HepG2 (cell line): ENCODE measurements at regions of chr10 and their contacts with region 1.

Region 1: DNA sequence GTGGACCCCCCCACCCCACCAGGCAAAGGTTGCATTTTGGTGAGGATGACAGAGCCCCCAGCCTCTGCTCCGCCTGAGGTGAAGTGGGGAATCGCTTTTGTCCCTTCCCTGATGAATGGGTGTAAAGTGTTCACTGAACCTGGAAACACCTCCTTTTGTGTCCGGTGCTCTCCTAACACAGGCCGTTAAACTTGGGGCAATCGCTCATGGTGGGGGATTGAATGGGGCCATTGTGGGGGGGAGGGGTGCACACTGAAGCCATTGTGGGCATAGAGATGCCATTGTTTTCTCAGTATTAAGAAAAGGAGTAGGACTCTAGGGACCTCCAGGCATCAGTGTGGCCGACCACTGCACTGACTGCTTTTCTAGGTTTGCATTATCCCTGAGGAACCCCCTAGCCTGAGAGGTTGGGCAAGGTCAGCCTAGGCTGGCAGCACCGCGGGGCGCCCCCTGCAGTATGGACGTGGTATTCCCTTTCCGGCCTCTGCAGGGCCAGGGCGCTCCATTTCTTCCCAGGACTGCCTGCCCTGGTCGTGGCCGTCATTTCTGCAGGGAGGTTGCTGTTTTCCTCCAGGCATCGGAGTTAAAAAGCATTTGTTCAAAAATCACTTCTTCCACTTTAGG is 158.3 kb downstream of the TCF7L2 start:
- DNase-seq: no peak
- ATAC-seq: peak; percentile 81
- H3K4me3 ChIP-seq: no peak overlapping the region
- H3K27ac ChIP-seq: no peak overlapping the region
- H3K4me1 ChIP-seq: peaks cover 26% of the 10 kb centered on the region
- H3K27me3 ChIP-seq: no peaks in the 10 kb centered on the region
- CTCF ChIP-seq: peak; percentile 71
- EP300 ChIP-seq: no peak
- POLR2A ChIP-seq: no peak
- RAD21 ChIP-seq: peak; percentile 68

Region 2: DNA sequence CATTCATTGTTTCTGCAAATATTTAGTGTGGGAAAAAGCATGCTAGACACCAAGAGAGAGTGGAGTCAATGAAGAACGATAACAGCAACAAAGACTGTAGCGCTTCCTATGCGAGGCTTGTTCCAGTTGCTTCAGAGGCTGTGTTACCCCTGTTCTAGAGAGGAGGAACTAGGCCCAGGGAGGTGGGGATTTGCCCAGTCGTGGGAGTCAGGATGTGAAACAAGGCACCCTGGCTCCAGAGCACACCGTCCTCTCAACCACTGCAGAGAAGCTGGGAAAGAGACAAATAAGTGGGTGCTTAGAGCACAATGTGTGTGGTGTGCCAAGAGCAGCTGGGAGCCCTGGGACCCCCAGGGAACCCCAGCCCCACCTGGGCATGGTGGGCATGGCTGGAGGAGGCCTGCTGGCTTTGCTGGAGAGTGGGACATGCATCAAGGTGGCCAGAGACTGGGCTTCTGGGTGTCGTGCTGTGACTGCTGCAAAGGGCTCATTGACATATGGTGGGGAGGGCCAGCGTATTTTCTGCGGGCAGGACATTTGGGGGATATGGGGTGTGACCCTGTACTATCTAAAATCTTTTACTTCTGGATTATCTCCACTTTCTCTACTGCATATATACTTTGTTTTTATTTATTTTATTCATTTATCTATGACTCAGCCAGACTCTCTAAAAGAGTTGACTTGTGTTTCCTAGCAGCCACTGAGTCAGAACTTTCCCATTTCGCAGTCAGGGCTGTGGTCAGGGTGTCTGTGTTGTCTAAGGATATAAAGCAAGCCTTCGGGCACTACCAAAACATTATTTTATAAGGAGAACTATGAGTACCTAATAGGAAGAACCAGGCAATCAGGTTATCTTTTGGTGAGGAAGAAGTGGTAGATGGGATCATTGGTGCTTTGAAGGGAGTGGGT is 62.9 kb before region 1 on chr10:
- CTCF ChIA-PET with region 1: no interaction called
- POLR2A ChIA-PET with region 1: no interaction called
- in situ Hi-C with region 1: no loop called
- intact Hi-C with region 1: no loop called
- DNase-seq: no peak
- ATAC-seq: no peak
- H3K4me3 ChIP-seq: no peak overlapping the region
- H3K27ac ChIP-seq: no peak overlapping the region
- H3K4me1 ChIP-seq: no peaks in the 10 kb centered on the region
- H3K27me3 ChIP-seq: no peaks in the 10 kb centered on the region
- CTCF ChIP-seq: no peak
- EP300 ChIP-seq: no peak
- POLR2A ChIP-seq: no peak
- RAD21 ChIP-seq: no peak

Region 3: DNA sequence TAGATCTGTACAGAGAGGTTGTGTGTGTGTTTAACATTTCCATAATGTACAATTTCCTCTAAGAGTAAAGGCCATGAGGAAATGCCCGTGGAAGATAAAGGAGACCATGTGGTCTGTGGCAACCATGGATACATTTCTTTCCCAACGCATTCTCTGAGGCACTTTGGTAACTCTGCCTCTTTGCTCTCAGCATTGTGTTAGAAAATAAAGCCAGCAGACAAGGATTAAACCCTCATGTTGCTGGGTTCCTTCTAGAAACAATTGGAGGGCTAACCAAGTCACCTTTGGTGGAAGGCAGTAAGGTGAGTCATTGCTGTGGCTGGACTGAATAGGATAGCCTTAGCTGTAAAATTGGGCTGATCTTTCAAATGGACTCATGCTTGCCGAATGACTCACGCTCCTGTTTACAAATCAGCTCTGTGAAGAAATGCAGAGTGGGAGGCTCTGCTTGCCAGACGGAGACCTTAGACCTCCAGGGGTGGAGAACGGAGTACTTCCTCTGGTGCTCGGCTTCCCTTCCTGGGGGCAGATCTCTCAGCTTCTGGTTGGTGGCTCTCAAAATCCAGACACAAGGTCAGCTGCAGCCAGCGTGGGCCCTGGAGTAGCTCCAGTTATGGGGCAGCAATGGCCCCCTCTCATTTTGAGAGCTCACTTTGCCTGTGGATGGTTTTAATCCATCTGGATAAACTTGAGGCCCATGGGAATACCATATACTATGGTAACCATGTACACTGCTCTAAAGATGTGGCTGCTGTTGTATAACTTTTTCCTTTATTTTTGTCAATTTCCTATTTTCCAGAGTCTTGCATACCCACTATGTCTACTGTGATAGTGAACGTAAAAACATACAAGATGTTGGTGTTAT is 20.9 kb before region 1 on chr10:
- CTCF ChIA-PET with region 1: no interaction called
- POLR2A ChIA-PET with region 1: no interaction called
- in situ Hi-C with region 1: no loop called
- intact Hi-C with region 1: loop called (anchors 2 kb)
- DNase-seq: peak; percentile 96
- ATAC-seq: peak; percentile 94
- H3K4me3 ChIP-seq: no peak overlapping the region
- H3K27ac ChIP-seq: peak overlapping the region; percentile 48
- H3K4me1 ChIP-seq: peaks cover 64% of the 10 kb centered on the region
- H3K27me3 ChIP-seq: no peaks in the 10 kb centered on the region
- CTCF ChIP-seq: no peak
- EP300 ChIP-seq: peak in 1 of 2 experiments; percentile 89; a peak in 2 of 4 replicates
- POLR2A ChIP-seq: no peak
- RAD21 ChIP-seq: no peak

Region 4: GRCh38 chr10:113142601-113143323 is 34.4 kb after region 1 on chr10:
- CTCF ChIA-PET with region 1: no interaction called
- POLR2A ChIA-PET with region 1: no interaction called
- in situ Hi-C with region 1: no loop called
- intact Hi-C with region 1: no loop called
- DNase-seq: no peak
- ATAC-seq: no peak
- H3K4me3 ChIP-seq: no peak overlapping the region
- H3K27ac ChIP-seq: no peak overlapping the region
- H3K4me1 ChIP-seq: no peaks in the 10 kb centered on the region
- H3K27me3 ChIP-seq: no peaks in the 10 kb centered on the region
- CTCF ChIP-seq: no peak
- EP300 ChIP-seq: no peak
- POLR2A ChIP-seq: no peak
- RAD21 ChIP-seq: no peak